AG04450 (cell line): ENCODE measurements at regions of chr1 and their contacts with region 1.

Region 1: DNA sequence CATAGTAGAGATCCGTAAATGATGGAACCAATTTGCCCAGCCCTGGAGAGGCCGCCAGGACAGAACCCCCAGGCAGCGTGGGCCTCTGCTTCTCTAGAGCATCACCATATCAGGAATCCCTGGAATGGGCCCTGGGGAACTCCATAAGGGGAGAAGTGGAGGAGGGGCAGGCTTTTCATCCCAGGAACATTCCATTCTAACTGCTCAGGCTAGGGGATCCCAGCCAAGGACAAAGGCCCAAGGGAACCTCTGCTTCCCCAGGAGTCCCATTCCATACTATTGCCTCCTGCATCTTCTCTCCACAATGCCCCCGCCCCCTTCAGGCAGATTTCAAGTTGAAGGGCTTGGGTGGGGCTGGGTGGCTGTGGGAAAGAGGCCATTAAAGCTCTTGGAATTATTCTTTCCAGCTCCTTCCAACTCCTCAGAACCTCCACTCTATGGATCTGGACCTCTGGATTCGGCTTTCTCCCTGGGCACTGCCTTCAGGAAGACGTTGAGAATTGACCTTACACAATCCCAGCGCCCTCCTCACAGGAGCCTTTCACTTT is 6.0 kb downstream of the TRNP1 start:
- DNase-seq: peak; percentile 95
- H3K4me3 ChIP-seq: no peak overlapping the region
- H3K27ac ChIP-seq: peak overlapping the region; percentile 95
- H3K27me3 ChIP-seq: no peaks in the 10 kb centered on the region
- CTCF ChIP-seq: 0 out of 2 replicates have a peak, but pooled peaks have one; percentile 1

Region 2: GRCh38 chr1:26949266-26949925 is 50.1 kb before region 1 on chr1:
- CTCF ChIA-PET with region 1: no interaction called
- POLR2A ChIA-PET with region 1: no interaction called
- DNase-seq: no peak
- H3K4me3 ChIP-seq: no peak overlapping the region
- H3K27ac ChIP-seq: peak overlapping the region; percentile 2
- H3K27me3 ChIP-seq: no peaks in the 10 kb centered on the region
- CTCF ChIP-seq: no peak

Region 3: GRCh38 chr1:26959722-26960615 is 39.5 kb before region 1 on chr1 and contains the start of gene KDF1:
- CTCF ChIA-PET with region 1: interaction called, 11 read pairs
- POLR2A ChIA-PET with region 1: no interaction called
- DNase-seq: no peak
- H3K4me3 ChIP-seq: peak within 1 kb of the TSS; percentile 35; the same call in 1 of the 2 replicates
- H3K27ac ChIP-seq: no peak within 1 kb of the TSS
- H3K27me3 ChIP-seq: peaks cover 13% of the 10 kb centered on the region
- CTCF ChIP-seq: no peak
- polyA plus RNA-seq, gene KDF1: 0.06 TPM in 1 of 2 replicates, not detected in the other

Region 4: DNA sequence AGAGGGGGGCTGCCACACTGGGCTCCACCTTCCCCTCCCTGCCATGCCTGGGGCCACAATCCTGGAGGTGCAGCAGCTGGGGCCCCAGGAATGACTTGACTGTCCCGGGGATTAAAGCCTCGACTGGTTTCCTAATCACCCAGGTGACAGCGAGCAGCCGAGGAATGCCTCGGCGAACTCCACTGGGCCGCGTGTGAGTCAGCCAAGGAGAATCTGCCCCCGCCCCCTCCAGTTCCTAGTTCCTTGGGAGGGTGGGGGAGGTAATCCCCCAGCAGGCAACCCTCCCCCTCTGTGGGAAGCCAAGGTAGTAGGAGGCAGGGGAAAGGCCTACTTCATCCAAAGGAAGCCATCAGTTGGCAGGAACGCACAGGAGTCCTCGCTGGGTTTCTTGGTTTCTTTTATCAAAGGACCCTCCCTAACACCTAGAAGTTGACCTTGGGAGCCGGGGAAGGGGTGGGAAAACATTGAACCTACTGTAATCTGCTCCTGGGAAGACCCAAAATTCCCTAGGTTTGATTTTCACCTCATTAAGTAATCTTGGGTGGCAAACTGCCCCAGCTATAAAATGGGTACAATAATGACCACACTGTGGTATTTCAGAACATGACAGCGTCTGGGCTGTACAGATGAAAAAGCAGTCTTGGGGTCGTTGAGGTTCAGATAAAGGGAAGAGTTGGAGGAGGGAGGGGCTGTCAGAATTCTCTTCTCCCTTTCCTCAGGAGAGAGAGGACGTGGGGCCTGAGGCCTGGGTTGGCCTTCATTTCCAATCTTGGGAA is 11.7 kb after region 1 on chr1:
- CTCF ChIA-PET with region 1: interaction called, 24 read pairs
- POLR2A ChIA-PET with region 1: interaction called, 15 read pairs
- DNase-seq: no peak
- H3K4me3 ChIP-seq: peak overlapping the region; percentile 23
- H3K27ac ChIP-seq: peak overlapping the region; percentile 52
- H3K27me3 ChIP-seq: no peaks in the 10 kb centered on the region
- CTCF ChIP-seq: no peak

Region 5: DNA sequence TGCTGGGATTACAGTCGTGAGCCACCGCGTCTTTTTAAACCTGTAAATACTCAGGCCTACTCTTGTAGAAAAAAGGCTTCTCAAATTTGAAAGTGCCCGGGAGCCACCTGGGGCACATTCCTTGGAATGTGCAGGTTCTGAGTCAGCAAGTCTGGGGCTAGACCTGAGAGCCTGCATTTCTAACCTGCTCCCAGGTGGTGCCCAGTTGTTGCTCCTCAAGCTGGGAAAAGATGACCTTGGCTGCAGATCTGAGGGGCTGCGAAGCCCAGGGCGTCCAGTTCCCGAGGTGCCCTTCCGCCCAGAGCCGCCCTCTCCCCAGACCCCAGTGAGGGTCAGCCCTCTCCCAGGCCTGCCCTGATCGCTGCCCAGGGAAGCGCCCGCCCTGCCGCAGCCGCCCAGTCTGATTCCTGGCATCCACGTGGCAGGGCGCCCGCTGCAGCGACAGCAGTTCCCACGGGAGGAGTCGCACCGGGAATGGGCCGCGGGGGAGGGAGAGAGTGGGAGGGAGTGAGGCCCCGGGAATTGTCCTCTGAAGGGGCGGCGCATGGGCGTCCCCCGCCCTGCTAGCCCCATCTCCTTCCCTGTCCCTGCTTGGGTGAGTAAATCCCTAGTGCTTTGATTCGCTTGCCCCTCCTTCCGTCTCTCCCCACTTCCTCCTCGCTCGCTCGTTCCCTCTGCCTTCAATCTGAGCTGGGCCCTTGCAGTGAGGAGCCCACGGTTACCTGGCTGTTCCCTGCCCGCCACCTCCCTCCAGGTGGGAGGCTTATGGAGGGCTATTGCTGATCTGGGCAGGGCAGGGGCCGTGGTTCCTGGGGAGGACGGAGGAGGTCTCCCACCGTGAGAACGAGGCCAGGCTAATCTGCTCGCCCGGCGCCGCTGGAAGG is 32.0 kb after region 1 on chr1:
- CTCF ChIA-PET with region 1: interaction called, 13 read pairs
- POLR2A ChIA-PET with region 1: interaction called, 4 read pairs
- DNase-seq: peak; percentile 34
- H3K4me3 ChIP-seq: peak overlapping the region; percentile 41
- H3K27ac ChIP-seq: peak overlapping the region; percentile 31
- H3K27me3 ChIP-seq: peaks cover 2% of the 10 kb centered on the region
- CTCF ChIP-seq: no peak

Region 6: GRCh38 chr1:27154991-27155781 is 155.7 kb after region 1 on chr1 and contains the start of gene SLC9A1:
- CTCF ChIA-PET with region 1: no interaction called
- POLR2A ChIA-PET with region 1: interaction called, 12 read pairs
- DNase-seq: peak; percentile 89
- H3K4me3 ChIP-seq: peak within 1 kb of the TSS; percentile 73
- H3K27ac ChIP-seq: peak within 1 kb of the TSS; percentile 78
- H3K27me3 ChIP-seq: no peaks in the 10 kb centered on the region
- CTCF ChIP-seq: peak; percentile 81
- polyA plus RNA-seq, gene SLC9A1: 10.8 and 16.4 TPM in 2 replicates